ENCODE measurements at regions of chr15 and their contacts with region 1.

Region 1: GRCh38 chr15:40952901-40953712 is at the start of gene CHAC1:
- DNase-seq: peak; percentile 94 to 97 (median 94)
- H3K4me3 ChIP-seq: peak within 1 kb of the TSS; percentile 69 to 79
- H3K4me3 Mint-ChIP-seq: peak within 1 kb of the TSS; percentile 91 to 98 (median 94)
- H3K27ac ChIP-seq: peak within 1 kb of the TSS; percentile 42
- H3K27ac Mint-ChIP-seq: peak within 1 kb of the TSS; percentile 82 to 94 (median 88)
- H3K4me1 ChIP-seq: peaks cover 14% of the 10 kb centered on the region
- H3K4me1 Mint-ChIP-seq: peaks cover 5 to 22% (median 16%) of the 10 kb centered on the region in 4 donors
- H3K27me3 ChIP-seq: no peaks in the 10 kb centered on the region
- H3K27me3 Mint-ChIP-seq: peaks cover 0 to 2% of the 10 kb centered on the region in 2 donors
- total RNA-seq, gene CHAC1: 1.2 TPM

Region 2: DNA sequence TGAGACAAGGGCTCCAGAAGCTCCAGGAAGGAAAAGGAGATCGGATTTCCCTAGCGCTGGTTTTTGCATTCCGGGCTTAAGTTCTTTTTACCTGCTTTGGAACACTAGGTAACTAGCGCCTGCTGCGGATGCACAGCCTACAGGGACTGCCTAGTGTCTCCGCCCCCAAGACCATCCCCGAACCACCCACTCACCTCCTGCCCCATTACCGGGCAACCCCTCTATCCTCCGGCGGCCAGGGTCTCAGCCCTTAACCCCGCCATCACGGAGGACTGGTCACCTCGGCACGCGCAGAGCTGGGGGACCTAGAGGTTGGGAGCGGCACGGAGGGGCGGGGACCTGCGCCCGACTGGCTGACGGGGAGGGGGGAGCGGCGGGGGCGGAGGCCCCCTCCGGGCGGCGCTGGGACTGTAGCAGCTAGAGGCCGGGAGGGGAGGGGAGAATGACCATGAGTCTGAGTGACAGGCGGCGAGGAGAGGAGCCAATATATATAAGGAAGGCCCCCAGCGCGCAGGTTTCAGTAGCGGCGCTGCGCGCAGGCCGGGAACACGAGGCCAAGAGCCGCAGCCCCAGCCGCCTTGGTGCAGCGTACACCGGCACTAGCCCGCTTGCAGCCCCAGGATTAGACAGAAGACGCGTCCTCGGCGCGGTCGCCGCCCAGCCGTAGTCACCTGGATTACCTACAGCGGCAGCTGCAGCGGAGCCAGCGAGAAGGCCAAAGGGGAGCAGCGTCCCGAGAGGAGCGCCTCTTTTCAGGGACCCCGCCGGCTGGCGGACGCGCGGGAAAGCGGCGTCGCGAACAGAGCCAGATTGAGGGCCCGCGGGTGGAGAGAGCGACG is 24.1 kb before region 1 on chr15 and contains the start of gene DLL4:
- CTCF ChIA-PET with region 1: interaction called, 5 read pairs
- POLR2A ChIA-PET with region 1: no interaction called
- intact Hi-C with region 1: loop called (anchors 1 kb)
- DNase-seq: peak in 4 of 5 donors; percentile 21 to 49 (median 38)
- H3K4me3 ChIP-seq: peak within 1 kb of the TSS; percentile 42 to 57
- H3K4me3 Mint-ChIP-seq: peak within 1 kb of the TSS; percentile 77 to 92 (median 84)
- H3K27ac ChIP-seq: no peak within 1 kb of the TSS
- H3K27ac Mint-ChIP-seq: peak within 1 kb of the TSS in 1 of 7 donors; percentile 65
- H3K4me1 ChIP-seq: peaks cover 52% of the 10 kb centered on the region
- H3K4me1 Mint-ChIP-seq: peaks cover 23 to 62% (median 34%) of the 10 kb centered on the region in 4 donors
- H3K27me3 ChIP-seq: peaks cover 33% of the 10 kb centered on the region
- H3K27me3 Mint-ChIP-seq: peaks cover 46 to 54% of the 10 kb centered on the region in 2 donors
- total RNA-seq, gene DLL4: not detected

Measured in CD4-positive, alpha-beta memory T cell (primary cell).